Naive thymus-derived CD4-positive, alpha-beta T cell (primary cell): ENCODE measurements at regions of chr2 and their contacts with region 1.

Region 1: DNA sequence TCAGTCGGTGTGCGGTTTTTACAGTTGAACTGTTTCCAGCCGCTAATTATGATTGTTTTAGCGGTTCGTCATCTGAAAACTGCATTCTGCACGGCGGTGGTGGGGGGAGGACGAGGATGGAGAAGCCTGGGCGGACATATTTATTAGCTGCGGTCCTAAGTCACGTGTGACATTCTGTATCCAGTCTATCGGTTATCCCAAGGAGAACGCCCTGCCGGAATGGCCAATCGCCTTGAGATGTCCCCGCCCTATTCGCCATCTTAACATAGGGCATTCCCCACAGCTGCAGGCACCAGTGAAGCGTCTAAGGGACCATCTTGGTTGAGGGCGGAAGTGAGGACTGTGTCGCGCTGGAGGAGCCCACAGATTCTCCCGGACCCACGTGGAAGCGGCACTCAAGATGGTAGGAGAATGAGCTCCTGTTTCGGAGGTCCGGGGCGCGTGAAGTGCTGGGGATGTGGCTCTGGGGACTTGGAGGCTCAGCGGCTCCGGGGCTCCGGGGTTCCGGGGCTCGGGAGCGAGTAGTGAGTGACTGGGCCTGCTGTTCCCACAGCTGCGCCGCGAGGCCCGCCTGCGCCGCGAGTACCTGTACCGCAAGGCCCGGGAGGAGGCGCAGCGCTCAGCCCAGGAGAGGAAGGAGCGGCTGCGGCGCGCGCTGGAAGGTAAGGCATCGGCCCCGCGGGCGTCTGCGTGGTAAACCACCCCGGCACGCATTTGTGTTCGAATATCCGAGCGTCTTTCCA is at the start of gene IMP4:
- DNase-seq: peak; percentile 83 to 98 (median 96)
- ATAC-seq: peak; percentile 93
- H3K4me3 ChIP-seq: peak within 1 kb of the TSS; percentile 80
- H3K4me3 Mint-ChIP-seq: peak within 1 kb of the TSS; percentile 94 to 100 (median 99)
- H3K27ac ChIP-seq: peak within 1 kb of the TSS; percentile 97
- H3K27ac Mint-ChIP-seq: peak within 1 kb of the TSS; percentile 98 to 100 (median 99)
- H3K4me1 ChIP-seq: peaks cover 10 to 19% of the 10 kb centered on the region in 2 donors
- H3K4me1 Mint-ChIP-seq: peaks cover 17 to 51% (median 37%) of the 10 kb centered on the region in 7 donors
- H3K27me3 ChIP-seq: no peaks in the 10 kb centered on the region
- H3K27me3 Mint-ChIP-seq: peaks cover 0 to 2% (median 0%) of the 10 kb centered on the region in 5 donors
- total RNA-seq, gene IMP4: 69.9 to 88.5 (median 79.3) TPM

Region 2: GRCh38 chr2:130181325-130181879 is 161.3 kb before region 1 on chr2 and contains the start of gene SMPD4:
- CTCF ChIA-PET with region 1: interaction called, 19 read pairs
- POLR2A ChIA-PET with region 1: interaction called, 65 read pairs
- intact Hi-C with region 1: loop called (anchors 1 kb)
- DNase-seq: peak; percentile 96 to 98 (median 98)
- ATAC-seq: peak; percentile 84
- H3K4me3 ChIP-seq: peak within 1 kb of the TSS; percentile 77
- H3K4me3 Mint-ChIP-seq: peak within 1 kb of the TSS; percentile 87 to 94 (median 91)
- H3K27ac ChIP-seq: peak within 1 kb of the TSS; percentile 91
- H3K27ac Mint-ChIP-seq: peak within 1 kb of the TSS; percentile 87 to 97 (median 95)
- H3K4me1 ChIP-seq: peaks cover 8 to 18% of the 10 kb centered on the region in 2 donors
- H3K4me1 Mint-ChIP-seq: peaks cover 18 to 35% (median 24%) of the 10 kb centered on the region in 7 donors
- H3K27me3 ChIP-seq: no peaks in the 10 kb centered on the region
- H3K27me3 Mint-ChIP-seq: no peaks in the 10 kb centered on the region
- total RNA-seq, gene SMPD4: 52.5 to 82.9 (median 59.8) TPM

Region 3: GRCh38 chr2:130316596-130316995 is 26.1 kb before region 1 on chr2:
- CTCF ChIA-PET with region 1: no interaction called
- POLR2A ChIA-PET with region 1: no interaction called
- intact Hi-C with region 1: no loop called
- DNase-seq: no peak
- ATAC-seq: no peak
- H3K4me3 ChIP-seq: no peak overlapping the region
- H3K4me3 Mint-ChIP-seq: no peak overlapping the region
- H3K27ac ChIP-seq: no peak overlapping the region
- H3K27ac Mint-ChIP-seq: no peak overlapping the region
- H3K4me1 ChIP-seq: no peaks in the 10 kb centered on the region
- H3K4me1 Mint-ChIP-seq: no peaks in the 10 kb centered on the region
- H3K27me3 ChIP-seq: no peaks in the 10 kb centered on the region
- H3K27me3 Mint-ChIP-seq: peaks cover 4 to 13% (median 6%) of the 10 kb centered on the region in 5 donors

Region 4: GRCh38 chr2:130332271-130333073 is 10.2 kb before region 1 on chr2:
- CTCF ChIA-PET with region 1: interaction called, 9 read pairs
- POLR2A ChIA-PET with region 1: interaction called, 23 read pairs
- intact Hi-C with region 1: loop called in 1 of 2 experiments (anchors 1 kb)
- DNase-seq: peak; percentile 40 to 71 (median 60)
- ATAC-seq: peak; percentile 92
- H3K4me3 ChIP-seq: no peak overlapping the region
- H3K4me3 Mint-ChIP-seq: peak overlapping the region in 9 of 10 donors; percentile 15 to 64 (median 56)
- H3K27ac ChIP-seq: no peak overlapping the region
- H3K27ac Mint-ChIP-seq: peak overlapping the region in 1 of 9 donors; percentile 70
- H3K4me1 ChIP-seq: peaks cover 0 to 4% of the 10 kb centered on the region in 2 donors
- H3K4me1 Mint-ChIP-seq: peaks cover 4 to 9% (median 5%) of the 10 kb centered on the region in 7 donors
- H3K27me3 ChIP-seq: no peaks in the 10 kb centered on the region
- H3K27me3 Mint-ChIP-seq: peaks cover 26 to 37% (median 28%) of the 10 kb centered on the region in 5 donors

Region 5: DNA sequence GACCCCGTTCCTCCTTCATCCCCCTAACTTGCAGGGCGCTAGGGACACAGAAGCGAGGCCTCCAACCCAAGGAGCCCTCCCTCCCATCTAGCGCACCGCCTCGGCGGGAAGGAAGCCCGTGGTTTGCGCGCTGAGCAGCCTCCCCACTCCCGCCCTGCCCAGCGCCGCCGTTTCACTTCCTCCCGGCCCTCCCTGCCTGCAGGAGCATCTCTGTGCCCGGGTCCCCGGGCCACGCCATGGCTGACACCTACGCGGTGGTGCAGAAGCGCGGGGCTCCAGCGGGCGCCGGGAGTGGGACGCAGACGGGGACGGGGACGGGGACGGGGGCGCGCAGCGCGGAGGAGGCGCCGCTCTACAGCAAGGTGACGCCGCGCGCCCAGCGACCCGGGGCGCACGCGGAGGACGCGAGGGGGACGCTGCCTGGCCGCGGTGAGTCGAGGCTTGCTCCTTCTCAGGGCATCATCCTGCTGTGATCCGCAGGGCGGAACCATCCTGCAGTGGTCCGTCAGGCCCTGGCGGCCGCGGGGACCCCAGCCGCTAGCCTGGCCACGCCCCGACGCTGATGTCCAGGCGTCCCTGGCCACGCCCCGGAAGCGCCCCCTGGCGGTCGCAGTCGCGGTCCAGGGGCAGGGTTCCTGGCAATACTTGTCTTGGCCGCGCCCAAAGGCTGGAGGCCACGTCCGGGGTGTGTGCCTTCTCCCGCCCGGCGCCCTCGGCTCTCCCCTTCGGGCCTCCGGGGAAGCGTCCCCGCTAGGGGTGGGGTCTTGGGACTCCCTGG is 29.5 kb after region 1 on chr2:
- CTCF ChIA-PET with region 1: interaction called, 8 read pairs
- POLR2A ChIA-PET with region 1: interaction called, 92 read pairs
- intact Hi-C with region 1: loop called (anchors 1 kb)
- DNase-seq: peak; percentile 49 to 92 (median 71)
- ATAC-seq: peak; percentile 86
- H3K4me3 ChIP-seq: peak overlapping the region; percentile 83
- H3K4me3 Mint-ChIP-seq: peak overlapping the region; percentile 87 to 99 (median 94)
- H3K27ac ChIP-seq: peak overlapping the region; percentile 71
- H3K27ac Mint-ChIP-seq: peak overlapping the region; percentile 88 to 97 (median 95)
- H3K4me1 ChIP-seq: peaks cover 25 to 34% of the 10 kb centered on the region in 2 donors
- H3K4me1 Mint-ChIP-seq: peaks cover 47 to 69% (median 65%) of the 10 kb centered on the region in 7 donors
- H3K27me3 ChIP-seq: no peaks in the 10 kb centered on the region
- H3K27me3 Mint-ChIP-seq: no peaks in the 10 kb centered on the region

Region 6: GRCh38 chr2:130727286-130728018 is 384.7 kb after region 1 on chr2:
- CTCF ChIA-PET with region 1: no interaction called
- POLR2A ChIA-PET with region 1: interaction called, 7 read pairs
- intact Hi-C with region 1: loop called in 1 of 2 experiments (anchors 1 kb)
- DNase-seq: peak; percentile 74 to 91 (median 85)
- ATAC-seq: peak; percentile 98
- H3K4me3 ChIP-seq: peak overlapping the region; percentile 86
- H3K4me3 Mint-ChIP-seq: peak overlapping the region; percentile 74 to 89 (median 86)
- H3K27ac ChIP-seq: peak overlapping the region; percentile 83
- H3K27ac Mint-ChIP-seq: peak overlapping the region; percentile 76 to 95 (median 91)
- H3K4me1 ChIP-seq: peaks cover 15 to 18% of the 10 kb centered on the region in 2 donors
- H3K4me1 Mint-ChIP-seq: peaks cover 0 to 17% (median 16%) of the 10 kb centered on the region in 7 donors
- H3K27me3 ChIP-seq: no peaks in the 10 kb centered on the region
- H3K27me3 Mint-ChIP-seq: peaks cover 0 to 13% (median 0%) of the 10 kb centered on the region in 5 donors

Region 7: DNA sequence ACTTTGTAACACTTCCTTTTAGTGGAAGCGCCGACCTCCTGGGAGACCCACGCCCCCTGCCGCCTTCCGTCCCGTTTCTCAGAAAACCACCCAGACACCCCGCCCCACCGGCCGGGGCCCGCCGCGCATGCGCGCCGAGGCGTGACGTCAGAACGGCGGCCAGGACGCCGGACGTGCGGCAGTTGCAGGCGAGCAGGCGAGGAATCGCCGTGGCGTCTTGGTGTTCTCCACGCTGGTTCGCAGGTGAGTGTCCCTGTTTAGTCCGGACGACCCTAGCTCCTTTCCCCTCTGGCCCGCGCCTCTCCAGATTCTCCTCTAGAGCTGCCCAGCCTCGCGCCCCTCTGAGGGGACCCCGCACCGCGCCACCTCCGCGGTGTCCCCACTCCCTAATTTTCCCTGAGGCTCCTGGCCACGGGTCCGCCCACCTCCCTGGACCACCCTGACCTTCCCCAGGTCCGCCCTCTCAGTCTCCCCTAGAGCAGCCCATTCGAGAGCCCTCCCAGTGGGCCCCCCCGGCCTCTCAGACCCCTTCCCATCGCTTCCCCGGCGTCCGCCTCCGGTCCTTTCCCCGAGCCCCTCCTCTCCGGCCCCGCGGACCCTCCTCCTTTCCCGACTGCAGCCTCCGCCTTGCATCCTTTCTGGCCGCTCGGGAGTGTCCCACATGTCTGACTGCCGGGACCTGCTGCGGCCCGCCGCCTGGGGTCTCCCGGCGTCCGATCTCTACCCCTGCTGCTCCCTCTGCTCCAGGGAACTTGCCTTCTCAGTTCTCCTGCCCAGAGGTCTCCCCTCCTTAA is 762.6 kb after region 1 on chr2 and contains the start of gene PLEKHB2:
- CTCF ChIA-PET with region 1: no interaction called
- POLR2A ChIA-PET with region 1: interaction called, 3 read pairs
- intact Hi-C with region 1: loop called (anchors 1 kb)
- DNase-seq: peak; percentile 88 to 99 (median 94)
- ATAC-seq: peak; percentile 81
- H3K4me3 ChIP-seq: peak within 1 kb of the TSS; percentile 95
- H3K4me3 Mint-ChIP-seq: peak within 1 kb of the TSS; percentile 93 to 98 (median 96)
- H3K27ac ChIP-seq: peak within 1 kb of the TSS; percentile 98
- H3K27ac Mint-ChIP-seq: peak within 1 kb of the TSS; percentile 93 to 99 (median 96)
- H3K4me1 ChIP-seq: peaks cover 15 to 22% of the 10 kb centered on the region in 2 donors
- H3K4me1 Mint-ChIP-seq: peaks cover 31 to 70% (median 52%) of the 10 kb centered on the region in 7 donors
- H3K27me3 ChIP-seq: no peaks in the 10 kb centered on the region
- H3K27me3 Mint-ChIP-seq: no peaks in the 10 kb centered on the region
- total RNA-seq, gene PLEKHB2: 43.1 to 92.3 (median 55.8) TPM